Colonic mucosa (tissue), 4 donors: ENCODE measurements at regions of chr12 and their contacts with region 1.

Region 1: DNA sequence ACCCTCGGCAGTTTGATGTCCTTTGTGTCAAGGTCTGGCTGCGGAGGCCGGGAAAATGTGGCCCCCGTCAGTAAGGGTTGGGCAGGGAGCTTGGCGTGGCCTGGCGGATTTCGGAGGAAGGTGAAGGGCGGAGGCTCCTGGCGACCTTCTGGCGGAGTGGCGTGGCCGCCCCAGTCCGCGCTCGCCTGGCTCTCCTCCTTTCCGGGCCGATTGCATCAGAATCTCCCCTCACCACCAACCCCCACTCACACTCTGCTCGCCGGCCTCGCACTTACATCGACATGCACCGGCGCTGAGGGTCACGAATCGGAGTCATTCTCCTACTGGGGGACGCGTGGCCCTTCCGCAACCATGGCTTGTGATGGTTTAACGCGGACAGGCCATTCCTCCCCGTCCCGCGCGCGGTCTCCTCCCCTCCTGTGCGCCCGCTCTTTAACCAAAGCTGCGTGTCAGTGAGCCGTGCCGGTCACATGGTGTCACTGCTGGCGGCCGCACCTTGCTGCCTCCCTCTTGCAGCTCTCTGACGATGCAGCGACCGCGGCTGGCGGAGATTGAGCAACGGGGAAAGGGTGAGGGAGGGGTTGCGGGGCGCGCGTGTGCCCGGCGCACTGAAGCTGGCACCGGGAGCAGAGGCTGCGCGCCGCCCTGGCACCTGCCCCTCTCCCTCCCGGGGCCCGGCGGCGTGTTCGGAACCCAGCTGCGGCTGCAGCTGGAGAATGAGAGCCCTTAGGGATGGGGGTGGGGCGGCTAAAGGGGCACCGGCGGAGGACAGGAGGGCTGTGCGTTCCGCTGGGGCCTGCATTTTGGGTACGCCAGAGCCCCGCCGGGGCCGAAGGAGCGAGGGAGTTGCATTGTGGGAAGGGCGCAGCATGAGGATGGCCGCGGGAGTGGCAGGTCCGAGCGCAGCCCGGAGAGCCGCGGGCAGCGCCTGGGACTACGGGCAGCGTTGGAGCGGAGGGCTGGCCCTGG is at the start of gene SLC38A1:
- DNase-seq: peak; percentile 88
- H3K4me3 ChIP-seq: peak within 1 kb of the TSS; percentile 64
- H3K27ac ChIP-seq: peak within 1 kb of the TSS; percentile 86
- H3K4me1 ChIP-seq: no peaks in the 10 kb centered on the region
- H3K27me3 ChIP-seq: no peaks in the 10 kb centered on the region
- CTCF ChIP-seq: no peak
- total RNA-seq, gene SLC38A1: 117 to 118 TPM

Region 2: GRCh38 chr12:46153268-46153872 is 115.5 kb before region 1 on chr12:
- intact Hi-C with region 1: loop called (anchors 10 kb)
- DNase-seq: no peak
- H3K4me3 ChIP-seq: no peak overlapping the region
- H3K27ac ChIP-seq: no peak overlapping the region
- H3K4me1 ChIP-seq: no peaks in the 10 kb centered on the region
- H3K27me3 ChIP-seq: no peaks in the 10 kb centered on the region
- CTCF ChIP-seq: peak; percentile 52